ENCODE measurements at regions of chr11 and their contacts with region 1.

Region 1: DNA sequence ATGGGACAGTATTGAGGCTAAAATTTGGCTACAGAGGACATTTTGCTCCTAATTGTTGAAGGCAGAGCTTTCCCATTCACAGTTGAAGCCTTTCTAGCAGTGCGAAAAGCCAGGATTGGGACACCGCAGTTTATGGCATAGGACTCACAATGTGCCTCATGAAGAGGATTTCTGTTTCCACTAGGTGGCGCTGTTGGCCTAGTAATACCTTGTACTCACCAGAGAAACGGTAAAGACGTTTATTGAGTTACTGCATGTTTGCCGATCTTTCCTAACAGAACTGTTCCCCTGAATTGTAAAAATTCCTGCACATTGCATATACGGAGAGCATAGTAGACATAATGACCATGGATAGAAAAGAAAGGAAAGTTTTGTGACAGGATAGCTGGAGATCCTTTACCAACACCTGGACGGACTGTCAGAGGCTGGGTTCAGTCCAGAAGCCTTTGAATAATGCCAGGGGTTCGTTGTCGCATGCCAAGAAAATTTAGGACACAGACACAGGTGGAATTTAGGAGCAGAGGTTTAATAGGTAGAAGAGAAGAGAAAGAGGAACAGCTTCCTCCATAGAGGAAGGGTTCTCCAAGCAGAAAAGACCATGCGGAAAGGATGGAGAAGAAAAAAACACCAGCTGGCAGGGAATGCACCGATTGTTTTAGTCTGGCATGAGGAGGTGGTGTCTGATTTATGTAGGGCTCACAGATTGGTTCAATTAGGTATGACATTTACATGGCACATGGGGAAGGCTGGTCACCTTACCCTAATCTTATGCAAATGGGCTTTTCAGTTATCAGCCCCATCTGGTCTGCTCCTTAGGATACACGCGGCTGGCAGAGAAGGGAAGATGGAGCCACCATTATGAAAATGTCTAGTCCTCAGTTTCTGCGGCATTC is 10.8 kb upstream of the OR51D1 start:
- DNase-seq: peak in 1 of 2 donors; percentile 53
- H3K4me3 ChIP-seq: no peak overlapping the region
- H3K27ac ChIP-seq: no peak overlapping the region
- H3K4me1 ChIP-seq: no peaks in the 10 kb centered on the region
- H3K27me3 ChIP-seq: peaks cover 0 to 3% of the 10 kb centered on the region in 2 donors
- CTCF ChIP-seq: peak; percentile 66 to 75

Region 2: DNA sequence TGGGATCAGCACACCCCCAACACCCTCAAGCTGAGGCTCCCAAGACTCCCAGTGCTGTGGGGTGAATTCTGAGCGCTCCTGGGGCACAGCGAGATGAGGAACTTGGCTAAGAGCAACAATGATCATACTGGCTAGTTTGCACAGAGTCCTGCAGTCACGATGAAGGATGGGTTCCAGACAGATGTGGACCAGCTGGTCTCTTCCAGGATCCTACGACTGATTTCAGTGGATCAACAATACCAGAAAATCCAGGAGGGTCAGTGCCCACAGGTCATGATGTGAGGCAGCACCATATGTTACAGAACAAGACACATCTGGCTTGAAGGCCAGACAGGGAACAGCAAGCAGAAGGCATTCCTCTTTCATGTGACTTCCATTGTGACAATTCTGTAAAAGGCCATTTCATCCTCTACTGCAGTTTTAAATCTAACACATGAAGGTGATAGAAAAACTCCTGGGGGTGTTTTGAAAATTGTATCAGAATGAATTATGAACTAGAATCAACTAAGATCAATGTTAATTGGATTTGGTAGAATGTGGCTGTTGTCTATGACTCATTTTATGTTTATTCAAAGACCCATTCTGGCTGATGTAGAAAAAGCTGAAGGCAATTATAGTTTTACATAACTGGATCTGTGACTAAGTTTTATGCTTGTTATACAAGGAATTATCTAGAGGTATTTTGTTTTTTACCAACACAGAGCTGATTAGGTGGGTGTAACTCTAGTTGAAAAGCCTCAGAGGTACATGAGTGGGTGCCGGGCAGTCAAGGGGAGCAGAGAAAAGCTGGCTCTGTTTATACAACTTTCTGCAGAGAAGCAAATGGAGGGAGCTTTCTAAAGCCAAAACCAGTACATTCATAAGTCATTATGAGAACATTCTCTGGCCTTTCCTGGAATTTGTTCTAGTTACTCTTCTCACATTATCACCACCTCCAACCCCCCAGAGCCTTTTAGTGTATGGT is 114.9 kb before region 1 on chr11:
- intact Hi-C with region 1: no loop called
- DNase-seq: no peak
- H3K4me3 ChIP-seq: no peak overlapping the region
- H3K27ac ChIP-seq: no peak overlapping the region
- H3K4me1 ChIP-seq: no peaks in the 10 kb centered on the region
- H3K27me3 ChIP-seq: no peaks in the 10 kb centered on the region
- CTCF ChIP-seq: no peak

Region 3: GRCh38 chr11:5004424-5005274 is 378.2 kb after region 1 on chr11:
- intact Hi-C with region 1: loop called (anchors 10 kb)
- DNase-seq: no peak
- H3K4me3 ChIP-seq: no peak overlapping the region
- H3K27ac ChIP-seq: no peak overlapping the region
- H3K4me1 ChIP-seq: no peaks in the 10 kb centered on the region
- H3K27me3 ChIP-seq: no peaks in the 10 kb centered on the region
- CTCF ChIP-seq: peak; percentile 29 to 36

Measured in tibial artery (tissue), 4 donors.